CD8-positive, alpha-beta T cell (primary cell): ENCODE measurements at regions of chr9 and their contacts with region 1.

Region 1: DNA sequence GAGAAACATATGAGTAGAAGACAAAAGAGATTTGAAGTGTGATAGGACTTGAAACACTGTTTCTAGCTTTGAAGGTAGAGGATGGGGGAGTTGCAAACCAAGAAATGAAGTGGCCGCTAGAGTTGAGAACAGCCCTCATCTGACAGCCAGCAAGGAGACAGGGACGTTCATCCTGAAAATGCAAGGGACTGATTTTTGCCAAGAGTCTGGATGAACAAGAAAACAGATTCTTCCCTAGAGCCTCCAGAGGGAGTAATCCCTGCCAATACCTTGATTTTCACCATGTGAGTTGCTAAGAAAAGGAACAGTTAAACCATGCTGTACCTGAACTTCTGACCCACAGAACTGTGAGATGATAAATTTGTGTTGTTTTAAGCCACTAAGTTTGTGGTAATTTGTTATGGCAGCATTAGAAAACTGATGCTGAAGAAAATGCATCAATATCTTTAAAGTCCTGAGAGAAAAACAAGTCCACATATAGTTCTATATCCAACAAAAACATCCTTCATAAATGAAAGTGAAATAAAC is 154.0 kb upstream of the ADAMTSL1 start:
- DNase-seq: no peak
- ATAC-seq: no peak
- H3K4me3 ChIP-seq: no peak overlapping the region
- H3K4me3 Mint-ChIP-seq: no peak overlapping the region
- H3K27ac ChIP-seq: no peak overlapping the region
- H3K27ac Mint-ChIP-seq: no peak overlapping the region
- H3K4me1 ChIP-seq: no peaks in the 10 kb centered on the region
- H3K4me1 Mint-ChIP-seq: no peaks in the 10 kb centered on the region
- H3K27me3 ChIP-seq: no peaks in the 10 kb centered on the region
- H3K27me3 Mint-ChIP-seq: peaks cover 4% of the 10 kb centered on the region
- CTCF ChIP-seq: no peak

Region 2: DNA sequence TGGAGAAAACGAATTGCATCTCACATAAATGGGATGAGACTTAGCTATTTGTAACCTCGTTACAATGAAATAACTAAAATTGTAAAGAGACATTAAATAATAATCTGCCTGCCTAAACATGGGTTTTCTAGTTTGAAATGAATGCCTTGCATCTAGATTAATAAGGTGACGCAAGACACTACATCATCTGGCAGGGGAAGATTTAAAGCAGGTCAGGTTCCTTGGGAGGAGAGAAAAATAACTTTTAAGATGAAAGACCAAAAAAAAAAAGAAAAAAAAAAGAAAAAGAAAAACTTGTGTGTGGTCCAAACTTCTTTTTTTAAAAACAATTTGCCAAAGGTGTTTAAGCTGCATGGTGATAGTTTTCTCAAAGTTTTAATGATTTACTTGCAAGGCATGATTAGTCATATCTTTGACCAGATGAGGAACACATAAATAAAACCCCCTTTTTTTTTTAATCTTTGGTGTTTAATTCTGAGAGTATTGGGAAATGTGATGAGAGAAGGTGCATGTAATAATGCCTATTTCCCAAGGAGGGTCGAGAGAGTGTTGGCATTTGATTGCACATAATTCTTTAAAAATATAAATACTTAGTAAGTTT is 31.1 kb after region 1 on chr9:
- CTCF ChIA-PET with region 1: no interaction called
- POLR2A ChIA-PET with region 1: no interaction called
- intact Hi-C with region 1: loop called in 1 of 2 experiments (anchors 1 kb)
- DNase-seq: no peak
- ATAC-seq: no peak
- H3K4me3 ChIP-seq: no peak overlapping the region
- H3K4me3 Mint-ChIP-seq: no peak overlapping the region
- H3K27ac ChIP-seq: no peak overlapping the region
- H3K27ac Mint-ChIP-seq: no peak overlapping the region
- H3K4me1 ChIP-seq: no peaks in the 10 kb centered on the region
- H3K4me1 Mint-ChIP-seq: no peaks in the 10 kb centered on the region
- H3K27me3 ChIP-seq: no peaks in the 10 kb centered on the region
- H3K27me3 Mint-ChIP-seq: no peaks in the 10 kb centered on the region
- CTCF ChIP-seq: no peak

Region 3: GRCh38 chr9:18379073-18379811 is 59.3 kb after region 1 on chr9:
- CTCF ChIA-PET with region 1: no interaction called
- POLR2A ChIA-PET with region 1: no interaction called
- intact Hi-C with region 1: no loop called
- DNase-seq: no peak
- ATAC-seq: no peak
- H3K4me3 ChIP-seq: no peak overlapping the region
- H3K4me3 Mint-ChIP-seq: no peak overlapping the region
- H3K27ac ChIP-seq: no peak overlapping the region
- H3K27ac Mint-ChIP-seq: no peak overlapping the region
- H3K4me1 ChIP-seq: no peaks in the 10 kb centered on the region
- H3K4me1 Mint-ChIP-seq: no peaks in the 10 kb centered on the region
- H3K27me3 ChIP-seq: no peaks in the 10 kb centered on the region
- H3K27me3 Mint-ChIP-seq: peaks cover 2% of the 10 kb centered on the region
- CTCF ChIP-seq: no peak

Region 4: DNA sequence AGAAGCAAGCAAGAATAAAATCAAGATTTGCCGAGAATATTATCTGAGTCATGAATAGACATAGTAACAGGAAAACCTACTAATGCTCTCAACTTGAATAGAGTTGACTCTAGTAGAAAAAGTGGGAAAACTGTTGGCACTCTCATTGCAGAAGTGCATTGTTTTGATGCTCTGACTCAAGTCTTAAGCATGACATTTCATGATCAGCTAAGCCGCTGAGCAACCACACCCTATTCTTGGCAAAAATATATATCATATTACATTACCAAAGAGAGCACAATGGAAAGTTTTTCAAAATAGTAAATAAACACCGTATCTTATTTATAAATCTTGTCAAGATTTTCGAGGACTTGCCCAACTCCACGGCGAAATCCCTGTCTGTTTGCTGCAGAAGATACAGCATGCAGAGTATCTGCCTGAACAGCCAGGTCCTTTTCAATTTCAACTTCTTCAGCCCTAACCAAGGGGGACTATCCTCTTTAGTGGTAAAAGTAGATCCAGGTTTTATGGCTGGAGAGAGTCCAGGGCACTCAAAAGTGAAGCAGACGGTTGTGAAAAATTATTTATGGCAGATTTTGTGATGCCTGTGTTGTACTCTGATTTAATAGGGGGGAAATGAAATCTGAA is 140.1 kb after region 1 on chr9:
- CTCF ChIA-PET with region 1: no interaction called
- POLR2A ChIA-PET with region 1: no interaction called
- intact Hi-C with region 1: no loop called
- DNase-seq: no peak
- ATAC-seq: no peak
- H3K4me3 ChIP-seq: no peak overlapping the region
- H3K4me3 Mint-ChIP-seq: no peak overlapping the region
- H3K27ac ChIP-seq: no peak overlapping the region
- H3K27ac Mint-ChIP-seq: no peak overlapping the region
- H3K4me1 ChIP-seq: no peaks in the 10 kb centered on the region
- H3K4me1 Mint-ChIP-seq: no peaks in the 10 kb centered on the region
- H3K27me3 ChIP-seq: no peaks in the 10 kb centered on the region
- H3K27me3 Mint-ChIP-seq: peaks cover 3% of the 10 kb centered on the region
- CTCF ChIP-seq: no peak